Ascending aorta (tissue), 2 donors: ENCODE measurements at regions of chr12 and their contacts with region 1.

Region 1: GRCh38 chr12:56987551-56988053 is 18.7 kb downstream of the ZBTB39 start:
- DNase-seq: peak in 1 of 2 donors; percentile 80
- H3K4me3 ChIP-seq: no peak overlapping the region
- H3K27ac ChIP-seq: no peak overlapping the region
- H3K4me1 ChIP-seq: no peaks in the 10 kb centered on the region
- H3K27me3 ChIP-seq: no peaks in the 10 kb centered on the region
- CTCF ChIP-seq: peak; percentile 87 to 91 (median 90)

Region 2: GRCh38 chr12:56751712-56752598 is 235.6 kb before region 1 on chr12 and contains the start of gene PRIM1:
- intact Hi-C with region 1: loop called (anchors 1 kb)
- DNase-seq: peak; percentile 18 to 90
- H3K4me3 ChIP-seq: peak within 1 kb of the TSS; percentile 74 to 80
- H3K27ac ChIP-seq: no peak within 1 kb of the TSS
- H3K4me1 ChIP-seq: no peaks in the 10 kb centered on the region
- H3K27me3 ChIP-seq: no peaks in the 10 kb centered on the region
- CTCF ChIP-seq: peak in 2 of 3 experiments; percentile 14 to 22
- total RNA-seq, gene PRIM1: 20.9 TPM